GM13976 (cell line): ENCODE measurements at regions of chr5 and their contacts with region 1.

Region 1: DNA sequence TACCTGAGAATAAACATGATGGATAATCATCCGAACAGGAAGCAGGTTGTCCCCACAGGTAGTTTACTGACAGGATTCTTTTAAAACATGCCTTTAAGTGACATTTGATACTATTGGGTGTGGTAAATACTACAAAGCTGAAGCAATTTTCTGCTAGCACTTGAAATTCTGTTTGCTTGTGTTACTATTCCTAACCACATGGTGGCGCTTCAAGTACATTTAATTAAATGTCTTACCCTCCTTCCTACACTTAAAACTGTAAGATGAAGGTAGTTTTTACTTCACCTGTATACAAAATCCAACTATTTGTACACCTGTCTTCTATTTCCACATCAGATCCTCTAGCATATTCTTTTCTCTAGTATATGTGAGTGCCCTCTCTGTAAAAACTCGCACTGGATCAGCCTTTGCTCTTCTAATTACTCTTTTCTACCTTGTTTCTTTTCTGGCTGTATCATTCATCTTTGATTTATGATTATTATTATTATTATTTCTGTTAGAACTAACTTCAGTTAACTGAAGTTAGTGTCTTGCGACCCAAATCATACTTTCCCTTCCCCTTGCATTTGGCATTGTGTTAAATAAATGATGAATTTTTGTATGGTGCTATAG is 18.4 kb downstream of the SLC25A46 start:
- DNase-seq: no peak
- CTCF ChIP-seq: peak; percentile 41

Region 2: GRCh38 chr5:111043712-111044506 is 286.7 kb after region 1 on chr5:
- in situ Hi-C with region 1: no loop called
- DNase-seq: no peak
- CTCF ChIP-seq: no peak

Region 3: DNA sequence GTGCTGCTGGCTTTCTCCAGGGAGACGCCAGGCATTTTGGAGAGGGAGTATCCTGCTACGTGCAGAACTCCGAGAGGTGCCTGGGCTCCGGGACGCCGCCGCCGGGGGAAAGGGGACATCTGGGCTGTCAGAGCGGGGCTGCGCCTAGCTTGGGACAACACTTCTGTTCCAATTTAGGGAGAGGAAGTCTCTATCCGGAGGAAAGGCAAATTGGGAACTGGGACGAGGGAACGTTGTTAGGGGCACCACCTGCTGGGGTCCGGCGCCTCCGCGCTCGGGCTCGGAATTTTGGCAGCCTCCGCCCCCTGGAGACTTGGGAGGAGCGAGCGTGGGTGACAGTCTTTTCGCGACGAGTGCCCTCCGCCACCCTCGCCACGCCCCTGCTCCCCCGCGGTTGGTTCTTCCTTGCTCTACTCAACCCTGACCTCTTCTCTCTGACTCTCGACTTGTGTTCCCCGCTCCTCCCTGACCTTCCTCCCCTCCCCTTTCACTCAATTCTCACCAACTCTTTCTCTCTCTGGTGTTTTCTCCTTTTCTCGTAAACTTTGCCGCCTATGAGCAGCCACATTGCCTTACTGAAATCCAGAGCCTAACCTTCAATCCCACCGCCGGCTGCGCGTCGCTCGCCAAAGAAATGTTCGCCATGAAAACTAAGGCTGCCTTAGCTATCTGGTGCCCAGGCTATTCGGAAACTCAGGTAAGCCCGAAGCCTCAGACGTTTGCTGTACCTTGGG is 315.9 kb after region 1 on chr5:
- in situ Hi-C with region 1: loop called (anchors 25 kb)
- DNase-seq: peak; percentile 53
- CTCF ChIP-seq: no peak

Region 4: DNA sequence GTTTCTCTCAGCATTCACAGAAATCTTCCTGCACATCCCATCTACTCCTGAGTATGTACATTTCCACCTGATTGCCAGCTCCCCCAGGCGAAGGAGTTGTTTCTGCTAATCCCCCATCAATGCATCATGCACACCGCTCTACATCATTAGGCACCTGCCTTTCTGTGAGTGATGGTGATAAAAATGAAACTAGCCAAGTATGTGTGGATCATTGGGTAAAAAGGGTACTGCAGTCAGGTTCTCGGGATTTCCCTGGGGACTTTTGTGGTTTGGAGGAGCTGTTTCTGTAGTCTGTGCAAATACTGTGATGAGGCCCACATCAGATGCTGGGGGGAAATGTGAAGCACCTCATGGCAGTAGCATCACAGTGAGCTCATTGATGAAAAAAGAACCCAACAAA is 497.4 kb after region 1 on chr5:
- in situ Hi-C with region 1: loop called (anchors 25 kb)
- DNase-seq: peak; percentile 50
- CTCF ChIP-seq: no peak

Region 5: DNA sequence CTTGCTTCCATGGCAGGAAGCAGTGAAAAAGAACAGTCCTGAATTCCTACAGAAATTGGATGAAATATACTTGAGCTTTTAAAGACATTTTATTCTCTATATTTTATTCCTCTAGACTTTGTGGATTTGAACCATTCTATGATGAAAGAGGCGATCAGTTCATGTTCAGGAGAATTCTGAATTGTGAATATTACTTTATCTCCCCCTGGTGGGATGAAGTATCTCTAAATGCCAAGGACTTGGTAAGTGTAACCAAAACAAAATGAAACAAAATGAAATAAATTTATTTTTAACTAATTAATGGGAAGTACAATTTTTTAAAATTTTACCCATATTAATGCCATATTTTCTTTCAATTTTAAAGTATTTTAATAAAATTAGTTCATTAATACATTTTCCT is 721.0 kb after region 1 on chr5:
- in situ Hi-C with region 1: loop called (anchors 25 kb)
- DNase-seq: no peak
- CTCF ChIP-seq: no peak

Region 6: DNA sequence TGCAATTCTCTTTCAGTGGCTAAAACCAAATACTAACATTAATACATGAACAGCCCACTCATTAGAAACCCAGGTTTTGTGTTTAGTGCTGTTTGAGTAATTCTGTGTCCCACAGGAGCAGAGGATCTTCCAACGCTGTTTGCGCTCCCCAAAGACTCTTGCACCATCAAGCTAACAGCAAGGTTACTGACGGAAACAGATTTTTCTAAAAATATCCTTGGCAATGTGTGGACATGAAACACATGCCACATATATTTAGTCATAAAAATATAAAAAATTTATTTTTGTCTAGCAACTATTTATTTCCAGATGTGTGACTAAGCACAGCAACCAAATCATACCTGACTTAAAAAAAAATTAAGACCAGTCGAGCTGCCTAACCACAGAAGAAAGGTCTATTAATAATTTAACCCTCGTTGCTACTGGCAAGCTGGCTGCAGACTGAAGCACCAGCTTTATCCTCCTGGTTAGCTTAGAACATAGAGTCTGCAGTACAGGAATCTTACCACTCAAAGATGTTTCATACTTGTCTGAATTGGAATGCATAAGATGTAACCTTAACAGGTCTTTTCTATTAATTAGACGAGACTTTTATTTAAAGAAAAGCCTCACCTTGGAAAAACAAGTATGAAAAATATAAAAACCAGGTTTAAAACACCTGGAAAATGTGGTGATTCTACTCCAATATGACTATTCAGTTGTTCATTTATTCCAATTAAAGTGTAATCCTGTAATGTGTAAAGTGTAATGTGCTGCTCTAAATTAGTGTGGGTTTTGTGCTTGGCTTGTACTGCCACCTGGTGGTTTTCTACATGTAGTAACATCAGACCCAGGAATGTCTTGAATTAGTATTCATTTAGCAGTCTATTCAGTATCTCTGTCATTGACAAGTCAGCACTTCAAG is 1389.4 kb after region 1 on chr5:
- in situ Hi-C with region 1: loop called (anchors 25 kb)
- DNase-seq: peak; percentile 44
- CTCF ChIP-seq: peak; percentile 55